ENCODE measurements at regions of chr5 and their contacts with region 1.

Region 1: GRCh38 chr5:149363358-149363757 is 5.5 kb downstream of the PCYOX1L start:
- DNase-seq: no peak
- ATAC-seq: no peak

Region 2: DNA sequence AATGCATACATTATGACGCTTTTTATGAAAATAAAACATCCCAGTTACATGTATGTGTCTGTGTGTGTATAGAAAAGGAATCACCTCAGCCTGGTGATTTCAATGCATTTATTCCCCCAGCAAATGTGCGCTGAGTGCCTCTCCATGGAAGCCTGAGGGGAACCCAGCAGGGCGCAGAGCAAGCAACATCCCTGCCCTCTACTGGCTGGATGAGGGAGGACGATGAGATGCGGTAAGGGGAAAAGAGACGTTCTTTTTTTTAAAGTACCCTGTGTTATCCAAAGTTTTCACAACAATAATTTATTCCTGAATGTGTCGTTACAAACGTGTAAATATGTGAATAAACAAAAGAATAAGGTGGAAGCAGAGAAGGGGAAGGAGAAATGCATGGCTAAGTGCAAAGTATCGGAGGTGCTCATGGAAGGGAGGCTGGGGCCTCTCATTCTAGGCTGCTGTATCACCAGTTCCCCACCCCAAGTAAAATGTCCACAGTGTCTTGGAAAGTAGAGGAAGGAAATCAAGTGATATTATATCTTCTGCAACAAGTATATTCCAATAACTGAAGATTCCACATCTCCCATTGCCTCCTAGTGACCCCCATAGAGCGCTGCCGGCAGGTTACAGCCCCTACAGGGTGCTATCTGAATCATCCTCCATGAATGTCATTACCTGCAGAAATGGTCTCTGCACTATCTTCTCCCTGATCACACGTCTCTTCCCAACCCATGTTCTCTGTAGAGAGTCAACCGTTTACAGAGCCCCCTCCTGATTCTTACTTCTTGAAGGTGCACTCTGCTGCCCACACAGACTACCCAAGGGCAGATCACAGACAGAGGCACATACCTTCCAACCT is 235.1 kb before region 1 on chr5:
- intact Hi-C with region 1: no loop called
- DNase-seq: no peak
- ATAC-seq: peak; percentile 50

Region 3: GRCh38 chr5:149576021-149576420 is 212.7 kb after region 1 on chr5:
- intact Hi-C with region 1: loop called (anchors 5 kb)
- DNase-seq: no peak
- ATAC-seq: no peak

Measured in Right ventricle myocardium superior (tissue), 1 donor.